Posterior vena cava (tissue), 2 donors: ENCODE measurements at regions of chr1 and their contacts with region 1.

Region 1: DNA sequence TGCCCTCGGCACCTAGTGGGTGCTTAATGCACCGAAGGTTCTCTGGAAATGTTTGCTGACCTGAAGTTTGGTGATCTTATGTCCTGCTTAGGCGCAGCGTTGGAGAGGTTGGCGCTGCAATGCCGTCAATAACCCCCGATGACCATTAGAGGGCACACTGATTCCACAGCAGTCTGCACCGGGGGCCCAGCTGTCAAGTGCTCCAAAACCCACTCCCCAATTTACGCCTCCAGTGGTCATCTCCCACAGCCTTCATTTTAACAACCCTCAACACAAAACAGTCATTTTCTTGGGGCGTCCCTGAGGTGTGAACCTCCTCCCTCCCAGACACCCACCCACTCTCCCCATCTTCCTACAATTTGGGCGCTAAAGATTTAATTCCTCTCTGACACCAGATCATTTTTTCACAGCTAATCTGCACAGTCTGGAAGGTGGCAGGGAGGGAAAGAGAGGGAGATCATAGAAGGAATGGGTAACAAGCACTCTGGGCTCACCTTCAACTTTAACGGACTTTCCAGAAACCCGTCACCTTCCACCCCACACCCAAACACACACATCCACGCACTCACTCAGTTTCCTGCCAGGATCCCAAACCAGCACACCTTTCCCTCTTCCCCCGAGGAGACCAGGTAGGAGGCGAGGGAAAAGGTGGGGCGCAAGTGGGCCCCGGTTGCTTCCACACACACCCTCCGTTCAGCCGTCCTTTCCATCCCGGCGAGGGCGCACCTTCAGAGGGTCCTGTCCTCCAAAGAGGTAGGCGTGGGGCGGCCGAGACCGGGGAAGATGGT is 576 bp upstream of the NPR1 start:
- DNase-seq: no peak

Region 2: DNA sequence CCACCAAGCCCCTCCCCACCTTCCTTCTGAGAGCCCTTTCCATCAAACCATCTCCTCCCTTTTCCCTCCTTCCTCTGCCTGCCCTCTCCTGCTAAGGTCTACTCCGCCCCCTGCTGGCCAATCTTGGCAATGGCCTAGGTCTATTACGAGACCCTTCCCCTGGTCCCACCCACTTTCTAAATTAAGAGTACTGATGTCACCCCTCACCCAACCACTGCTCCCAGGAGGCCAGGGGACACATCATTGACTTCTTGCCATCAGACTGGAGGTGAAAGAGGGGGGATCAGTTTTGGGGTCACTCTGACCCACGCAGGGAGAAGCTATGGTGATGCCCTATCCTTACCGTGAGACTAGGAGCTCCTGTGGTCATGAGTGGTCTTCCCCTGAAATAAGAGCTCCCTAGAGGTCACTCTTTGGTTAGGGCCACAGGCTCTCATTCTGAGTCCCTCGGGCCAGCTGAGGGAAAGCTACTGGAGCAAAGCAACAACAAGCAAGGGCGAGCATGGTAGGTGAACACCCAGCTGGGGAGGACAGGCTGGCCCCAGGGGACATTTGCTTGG is 182.9 kb before region 1 on chr1:
- intact Hi-C with region 1: no loop called
- DNase-seq: peak; percentile 93

Region 3: GRCh38 chr1:153749408-153750005 is 71.6 kb after region 1 on chr1:
- intact Hi-C with region 1: loop called in 1 of 2 experiments (anchors 2 kb)
- DNase-seq: peak; percentile 96

Region 4: GRCh38 chr1:153771841-153772593 is 94.1 kb after region 1 on chr1:
- intact Hi-C with region 1: loop called (anchors 2 to 5 kb)
- DNase-seq: no peak

Region 5: DNA sequence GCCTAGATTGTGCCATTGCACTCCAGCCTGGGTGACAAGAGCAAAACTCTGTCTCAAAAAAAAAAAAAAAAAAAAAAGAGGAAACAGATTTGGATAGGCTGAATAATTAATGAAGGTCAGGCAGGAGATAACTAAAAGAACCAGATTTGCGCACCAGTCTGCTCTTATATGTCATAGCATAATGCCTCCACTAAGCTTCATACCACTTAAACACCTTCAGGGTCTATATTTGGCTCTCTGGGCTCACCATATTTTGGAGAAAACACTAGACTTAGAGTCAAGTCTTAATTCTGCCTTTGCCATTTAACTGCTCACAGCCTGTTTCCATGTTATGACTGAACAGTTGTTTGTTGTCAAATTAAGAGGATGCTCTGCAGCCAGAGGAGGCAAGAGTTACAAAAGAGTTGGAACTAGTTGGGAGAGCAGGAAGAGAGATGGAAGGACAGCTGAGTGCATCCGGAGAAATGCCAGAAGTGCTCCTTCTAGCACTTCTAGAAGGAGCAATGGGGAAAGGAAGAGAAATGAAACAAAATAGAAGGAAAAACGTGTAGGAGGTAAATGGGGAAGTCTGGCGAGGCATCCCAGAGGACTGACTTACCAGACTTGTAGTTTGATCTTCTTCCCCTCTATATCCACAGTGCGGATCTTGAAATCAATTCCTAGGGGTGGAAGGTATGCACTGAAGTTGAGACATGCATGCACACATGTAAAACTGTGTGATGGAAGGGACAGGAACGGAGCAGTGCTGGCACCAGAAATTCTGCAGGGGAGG is 306.4 kb after region 1 on chr1:
- intact Hi-C with region 1: loop called (anchors 5 to 10 kb)
- DNase-seq: no peak

Region 6: GRCh38 chr1:153990468-153991150 is 312.7 kb after region 1 on chr1 and contains the start of gene RPS27:
- intact Hi-C with region 1: loop called in 1 of 2 experiments (anchors 10 kb)
- DNase-seq: peak; percentile 93
- total RNA-seq, gene RPS27: 1,661 to 1,802 TPM